B cell (primary cell): ENCODE measurements at regions of chr3 and their contacts with region 1.

Region 1: DNA sequence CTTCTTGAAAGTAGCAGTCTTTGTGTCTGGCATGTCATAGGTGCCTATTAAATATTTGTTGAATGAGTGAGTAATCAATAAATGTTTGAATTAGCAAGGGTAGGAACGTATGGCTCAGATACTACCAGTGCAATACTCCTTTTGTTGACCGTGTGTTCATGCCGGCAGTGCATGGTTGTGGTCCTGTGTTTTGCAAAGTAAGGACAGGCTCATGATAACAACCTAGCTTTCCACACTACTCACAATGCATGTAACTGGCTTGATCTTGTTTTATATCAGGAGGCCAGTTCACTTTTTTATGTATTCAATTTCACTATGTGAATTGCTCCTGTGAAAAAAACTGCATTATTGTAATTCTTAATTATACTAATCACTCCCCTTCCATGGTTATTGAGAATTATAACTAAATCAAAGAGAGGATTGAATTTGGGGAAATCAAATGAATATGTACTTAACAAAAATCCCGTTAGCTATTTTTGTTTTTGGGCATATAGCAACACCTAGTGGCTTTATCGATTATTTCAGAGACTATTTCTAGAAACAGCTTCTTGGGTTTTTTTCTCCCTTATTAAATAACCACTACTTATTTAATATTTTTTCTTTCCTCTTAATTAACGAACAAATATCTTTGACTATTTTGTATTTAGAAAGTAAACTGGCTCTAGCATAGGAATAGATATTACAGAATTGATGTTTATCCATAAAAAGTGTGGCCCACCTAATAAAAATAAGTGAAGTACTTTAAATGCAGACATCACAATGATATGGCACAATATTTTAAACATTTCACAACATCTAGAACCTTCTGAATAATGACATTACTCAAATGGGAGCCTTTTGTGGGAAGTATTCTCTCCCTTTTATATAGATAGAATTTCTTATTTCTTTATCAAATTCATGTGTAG is 218.5 kb downstream of the BBX start:
- DNase-seq: peak; percentile 43
- ATAC-seq: no peak
- H3K4me3 ChIP-seq: no peak overlapping the region
- H3K4me3 Mint-ChIP-seq: no peak overlapping the region
- H3K27ac ChIP-seq: no peak overlapping the region
- H3K27ac Mint-ChIP-seq: no peak overlapping the region
- H3K4me1 ChIP-seq: peaks cover 18 to 21% of the 10 kb centered on the region in 2 donors
- H3K4me1 Mint-ChIP-seq: peaks cover 36% of the 10 kb centered on the region
- H3K27me3 ChIP-seq: no peaks in the 10 kb centered on the region
- H3K27me3 Mint-ChIP-seq: no peaks in the 10 kb centered on the region
- CTCF ChIP-seq: peak; percentile 76

Region 2: DNA sequence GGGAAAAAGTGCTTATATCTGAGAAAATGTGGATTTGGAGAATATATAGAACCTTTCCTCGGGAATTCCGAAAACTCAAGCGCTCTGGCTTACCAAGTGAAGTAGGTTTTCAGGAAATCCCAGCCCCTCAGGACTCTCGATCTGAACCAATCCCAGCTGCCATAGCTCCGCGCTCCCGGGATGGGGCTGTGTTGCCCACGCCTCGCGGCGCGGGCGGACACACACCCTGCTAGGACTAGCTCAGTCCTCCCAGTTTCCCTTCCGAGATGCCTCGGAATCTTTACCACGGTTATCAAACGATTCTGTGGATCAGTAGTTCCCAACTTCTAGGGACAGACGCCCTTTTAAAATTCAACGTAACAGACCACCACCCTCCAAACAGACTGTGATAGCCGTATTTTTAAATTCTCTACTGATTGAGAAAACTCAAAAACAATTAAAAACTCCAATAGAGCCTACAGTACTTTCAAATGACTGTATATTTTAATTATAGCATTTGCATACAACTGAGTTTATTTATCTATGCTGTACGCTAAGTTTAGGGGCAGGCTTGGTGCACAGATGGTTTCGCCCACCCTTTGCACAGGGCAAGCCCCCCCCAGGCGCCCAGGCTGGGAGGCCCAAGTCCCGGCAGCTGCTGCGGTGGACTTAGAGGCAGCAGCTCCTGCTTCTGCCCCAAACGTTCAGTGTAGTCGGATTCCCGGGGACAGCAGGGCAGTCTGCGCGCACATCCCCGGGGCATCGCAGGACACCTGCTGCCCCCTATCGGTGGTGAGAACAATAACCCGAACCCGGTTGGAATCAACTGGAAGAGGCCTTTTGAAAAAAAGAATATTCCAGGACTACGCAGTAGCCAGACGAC is 311.7 kb before region 1 on chr3:
- CTCF ChIA-PET with region 1: no interaction called
- POLR2A ChIA-PET with region 1: no interaction called
- intact Hi-C with region 1: loop called (anchors 10 kb)
- DNase-seq: peak; percentile 82
- ATAC-seq: peak; percentile 52
- H3K4me3 ChIP-seq: peak overlapping the region; percentile 44 to 80 (median 70)
- H3K4me3 Mint-ChIP-seq: peak overlapping the region; percentile 97
- H3K27ac ChIP-seq: no peak overlapping the region
- H3K27ac Mint-ChIP-seq: peak overlapping the region; percentile 85
- H3K4me1 ChIP-seq: peaks cover 49% of the 10 kb centered on the region in 2 donors
- H3K4me1 Mint-ChIP-seq: peaks cover 59% of the 10 kb centered on the region
- H3K27me3 ChIP-seq: no peaks in the 10 kb centered on the region
- H3K27me3 Mint-ChIP-seq: no peaks in the 10 kb centered on the region
- CTCF ChIP-seq: peak; percentile 90

Region 3: DNA sequence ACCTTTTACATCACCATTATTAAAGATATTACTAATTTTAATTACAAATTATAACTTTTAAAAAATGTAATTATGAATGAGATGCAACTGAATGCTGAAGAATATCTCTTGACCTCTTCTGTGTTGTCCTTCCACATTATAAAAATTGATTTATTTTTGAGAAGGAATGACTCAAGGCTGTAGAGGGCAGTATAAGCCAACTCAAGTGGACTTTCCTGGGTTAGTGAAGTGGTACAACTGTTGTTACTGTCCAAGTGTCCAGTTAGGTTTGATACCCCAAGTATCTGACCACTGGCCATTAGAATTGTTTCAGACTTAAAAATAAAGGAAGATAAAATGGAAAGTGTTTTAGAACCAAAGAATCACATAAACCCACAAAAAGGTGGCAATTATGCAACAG is 166.6 kb before region 1 on chr3:
- CTCF ChIA-PET with region 1: interaction called, 14 read pairs
- POLR2A ChIA-PET with region 1: no interaction called
- intact Hi-C with region 1: loop called (anchors 1 kb)
- DNase-seq: peak; percentile 17
- ATAC-seq: no peak
- H3K4me3 ChIP-seq: no peak overlapping the region
- H3K4me3 Mint-ChIP-seq: no peak overlapping the region
- H3K27ac ChIP-seq: no peak overlapping the region
- H3K27ac Mint-ChIP-seq: no peak overlapping the region
- H3K4me1 ChIP-seq: no peaks in the 10 kb centered on the region
- H3K4me1 Mint-ChIP-seq: peaks cover 24% of the 10 kb centered on the region
- H3K27me3 ChIP-seq: no peaks in the 10 kb centered on the region
- H3K27me3 Mint-ChIP-seq: no peaks in the 10 kb centered on the region
- CTCF ChIP-seq: peak; percentile 63

Region 4: GRCh38 chr3:107660306-107660976 is 80.8 kb before region 1 on chr3:
- CTCF ChIA-PET with region 1: interaction called, 69 read pairs
- POLR2A ChIA-PET with region 1: no interaction called
- intact Hi-C with region 1: loop called (anchors 1 kb)
- DNase-seq: peak; percentile 51
- ATAC-seq: no peak
- H3K4me3 ChIP-seq: no peak overlapping the region
- H3K4me3 Mint-ChIP-seq: no peak overlapping the region
- H3K27ac ChIP-seq: no peak overlapping the region
- H3K27ac Mint-ChIP-seq: no peak overlapping the region
- H3K4me1 ChIP-seq: peaks cover 8% of the 10 kb centered on the region in 2 donors
- H3K4me1 Mint-ChIP-seq: peaks cover 25% of the 10 kb centered on the region
- H3K27me3 ChIP-seq: no peaks in the 10 kb centered on the region
- H3K27me3 Mint-ChIP-seq: no peaks in the 10 kb centered on the region
- CTCF ChIP-seq: peak; percentile 83

Region 5: DNA sequence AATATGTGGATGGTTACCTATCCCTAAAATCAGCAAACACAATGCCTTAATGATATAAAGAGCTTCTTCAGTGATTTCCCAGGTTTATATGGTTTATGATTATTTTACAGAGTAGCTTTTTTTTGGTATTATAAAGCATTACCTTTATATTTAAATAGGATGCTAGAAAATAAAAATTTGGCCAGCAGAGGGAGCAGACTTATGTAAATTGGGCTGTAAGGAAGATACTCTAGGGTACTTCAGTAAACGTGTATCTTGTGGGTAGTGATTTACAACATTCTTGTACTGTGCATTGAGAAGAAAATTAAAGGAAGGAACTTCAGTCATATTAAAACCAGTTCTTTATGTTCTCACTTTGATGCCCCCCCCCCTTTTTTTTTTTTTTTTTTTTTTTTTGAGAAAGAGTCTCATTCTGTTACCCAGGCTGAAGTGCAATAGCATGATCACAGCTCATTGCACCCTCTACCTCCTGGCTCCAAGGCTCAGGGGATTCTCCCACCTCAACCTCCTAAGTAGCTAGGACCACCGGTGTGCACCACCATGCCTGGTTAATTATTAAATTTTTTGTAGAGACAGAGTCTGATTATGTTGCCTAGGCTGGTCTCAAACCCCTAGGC is 50.6 kb before region 1 on chr3:
- CTCF ChIA-PET with region 1: interaction called, 24 read pairs
- POLR2A ChIA-PET with region 1: no interaction called
- intact Hi-C with region 1: loop called (anchors 1 kb)
- DNase-seq: peak; percentile 66
- ATAC-seq: peak; percentile 64
- H3K4me3 ChIP-seq: no peak overlapping the region
- H3K4me3 Mint-ChIP-seq: no peak overlapping the region
- H3K27ac ChIP-seq: no peak overlapping the region
- H3K27ac Mint-ChIP-seq: no peak overlapping the region
- H3K4me1 ChIP-seq: peaks cover 0 to 2% of the 10 kb centered on the region in 2 donors
- H3K4me1 Mint-ChIP-seq: peaks cover 6% of the 10 kb centered on the region
- H3K27me3 ChIP-seq: no peaks in the 10 kb centered on the region
- H3K27me3 Mint-ChIP-seq: no peaks in the 10 kb centered on the region
- CTCF ChIP-seq: peak; percentile 70

Region 6: DNA sequence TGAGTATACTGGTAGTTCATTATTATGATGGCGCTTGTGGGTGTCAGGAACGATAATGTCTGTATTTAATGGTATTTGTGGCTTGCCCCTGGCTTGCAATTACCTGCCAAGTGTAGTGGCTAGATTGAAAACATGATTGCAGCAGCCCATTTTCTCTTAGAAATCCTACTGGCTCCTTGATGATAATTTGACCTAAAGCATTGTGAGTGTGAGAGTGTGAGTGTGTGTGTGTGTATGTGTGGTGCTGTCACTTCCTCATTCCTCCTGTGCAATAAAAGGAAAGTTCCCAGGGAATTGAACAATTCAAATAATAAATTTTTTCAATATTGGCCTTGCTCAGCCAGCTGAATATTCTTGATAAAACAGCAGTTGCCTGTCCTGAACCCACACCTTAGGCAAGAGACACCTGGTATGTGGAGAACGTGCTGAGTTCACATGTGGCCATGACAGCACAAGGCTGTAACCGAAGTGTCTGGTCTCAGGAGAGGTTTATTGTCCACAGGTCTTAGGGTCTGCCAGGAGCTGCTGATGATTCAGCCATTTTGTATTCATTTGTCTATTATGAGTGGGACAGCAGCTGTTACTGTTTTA is 156.3 kb after region 1 on chr3:
- CTCF ChIA-PET with region 1: no interaction called
- POLR2A ChIA-PET with region 1: no interaction called
- intact Hi-C with region 1: no loop called
- DNase-seq: no peak
- ATAC-seq: no peak
- H3K4me3 ChIP-seq: no peak overlapping the region
- H3K4me3 Mint-ChIP-seq: no peak overlapping the region
- H3K27ac ChIP-seq: no peak overlapping the region
- H3K27ac Mint-ChIP-seq: no peak overlapping the region
- H3K4me1 ChIP-seq: no peaks in the 10 kb centered on the region
- H3K4me1 Mint-ChIP-seq: no peaks in the 10 kb centered on the region
- H3K27me3 ChIP-seq: peaks cover 0 to 13% (median 5%) of the 10 kb centered on the region in 4 experiments
- H3K27me3 Mint-ChIP-seq: peaks cover 45% of the 10 kb centered on the region
- CTCF ChIP-seq: no peak